ENCODE measurements at regions of chr7 and their contacts with region 1.

Region 1: DNA sequence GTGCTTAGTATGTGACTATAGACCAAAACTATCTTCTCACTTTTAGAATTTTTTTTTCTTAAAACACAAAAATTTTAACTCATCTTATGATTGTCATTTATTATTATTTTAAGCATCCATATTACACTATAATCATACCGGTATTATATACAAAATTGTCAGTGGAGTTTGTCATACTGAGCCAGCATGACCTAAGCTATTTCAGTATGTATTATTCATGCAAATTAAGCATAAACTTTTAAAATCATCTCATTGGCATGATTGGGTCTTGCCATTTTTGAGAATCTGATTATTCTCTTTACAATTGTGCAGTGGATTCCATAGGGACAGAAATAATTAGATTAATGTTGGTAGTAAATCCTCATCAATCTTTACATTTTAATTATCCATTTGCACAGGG is 46.2 kb upstream of the STMP1 start:
- DNase-seq: peak; percentile 68
- ATAC-seq: peak; percentile 71
- H3K4me3 ChIP-seq: no peak overlapping the region
- H3K27ac ChIP-seq: no peak overlapping the region
- H3K4me1 ChIP-seq: no peaks in the 10 kb centered on the region
- H3K27me3 ChIP-seq: no peaks in the 10 kb centered on the region
- CTCF ChIP-seq: no peak
- POLR2A ChIP-seq: no peak
- RAD21 ChIP-seq: no peak

Region 2: GRCh38 chr7:135575296-135575695 is 40.8 kb before region 1 on chr7:
- CTCF ChIA-PET with region 1: no interaction called
- POLR2A ChIA-PET with region 1: no interaction called
- dilution Hi-C with region 1: no loop called
- in situ Hi-C with region 1: no loop called
- intact Hi-C with region 1: loop called (anchors 5 kb)
- DNase-seq: no peak
- ATAC-seq: no peak
- H3K4me3 ChIP-seq: no peak overlapping the region
- H3K27ac ChIP-seq: no peak overlapping the region
- H3K4me1 ChIP-seq: no peaks in the 10 kb centered on the region
- H3K27me3 ChIP-seq: no peaks in the 10 kb centered on the region
- CTCF ChIP-seq: no peak
- POLR2A ChIP-seq: no peak
- RAD21 ChIP-seq: no peak

Measured in IMR-90 (cell line).